Mucosa of descending colon (tissue), 3 donors: ENCODE measurements at regions of chr9 and their contacts with region 1.

Region 1: GRCh38 chr9:32384364-32385151 is at the start of gene ACO1:
- DNase-seq: peak; percentile 93 to 96 (median 93)
- ATAC-seq: peak; percentile 98
- H3K4me3 ChIP-seq: peak within 1 kb of the TSS; percentile 46
- H3K4me1 ChIP-seq: peaks cover 8% of the 10 kb centered on the region
- CTCF ChIP-seq: no peak
- total RNA-seq, gene ACO1: 30.9 to 50.4 (median 32.6) TPM

Region 2: GRCh38 chr9:32326146-32326545 is 58.4 kb before region 1 on chr9:
- intact Hi-C with region 1: no loop called
- DNase-seq: no peak
- ATAC-seq: no peak
- H3K4me3 ChIP-seq: no peak overlapping the region
- H3K4me1 ChIP-seq: no peaks in the 10 kb centered on the region
- CTCF ChIP-seq: no peak

Region 3: DNA sequence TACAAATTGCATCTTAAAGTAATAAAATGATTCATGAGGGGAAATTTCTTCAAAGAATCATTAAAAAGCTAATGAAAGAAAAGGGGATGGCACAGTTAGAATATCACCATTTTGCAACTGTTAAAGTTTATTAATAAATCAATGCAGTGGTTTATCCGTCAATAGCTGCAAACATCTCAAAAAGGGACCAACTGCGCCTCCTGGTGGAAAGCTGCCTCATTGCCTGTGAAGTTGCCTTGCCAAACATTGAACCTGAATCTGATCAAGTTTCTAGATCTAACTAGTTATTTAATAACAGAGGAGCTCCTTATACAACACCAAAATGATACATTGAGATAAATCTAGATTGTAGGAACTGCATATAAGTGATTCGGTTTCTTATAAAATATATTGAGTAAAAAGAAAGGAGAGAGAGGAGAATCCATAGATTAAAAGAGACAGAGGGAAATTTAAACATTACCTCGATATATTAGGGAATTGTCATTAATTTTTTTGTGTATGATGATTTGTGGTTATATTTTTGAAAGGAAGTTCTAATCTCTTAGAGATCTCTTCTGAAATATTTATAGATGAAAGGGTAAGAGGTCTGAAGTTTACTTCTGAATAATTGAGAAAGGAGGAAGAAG is 195.3 kb after region 1 on chr9:
- intact Hi-C with region 1: loop called in 1 of 2 experiments (anchors 5 kb)
- DNase-seq: peak in 2 of 3 donors; percentile 78 to 88
- ATAC-seq: peak; percentile 56
- H3K4me3 ChIP-seq: no peak overlapping the region
- H3K4me1 ChIP-seq: no peaks in the 10 kb centered on the region
- CTCF ChIP-seq: peak; percentile 82

Region 4: DNA sequence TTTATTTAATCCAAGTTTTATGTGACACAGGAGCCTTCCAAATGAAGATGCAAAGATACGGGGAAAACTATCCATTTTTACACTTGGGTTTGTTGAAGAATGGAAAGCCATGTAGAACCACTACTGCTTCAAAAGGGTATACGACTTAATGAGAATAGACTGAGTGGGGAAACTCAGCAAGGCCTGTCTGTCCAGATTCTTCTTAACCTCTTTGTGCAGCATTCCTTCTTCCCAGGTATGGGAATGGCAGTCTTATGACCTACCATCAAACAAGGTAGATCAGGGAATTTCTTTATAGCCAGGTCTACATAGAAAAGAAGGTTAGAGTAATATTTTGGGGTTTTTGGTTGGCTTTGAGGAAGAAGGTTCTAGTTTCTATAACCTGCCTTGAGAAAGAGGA is 593.5 kb after region 1 on chr9:
- intact Hi-C with region 1: loop called in 1 of 2 experiments (anchors 5 kb)
- DNase-seq: no peak
- ATAC-seq: no peak
- H3K4me3 ChIP-seq: no peak overlapping the region
- H3K4me1 ChIP-seq: no peaks in the 10 kb centered on the region
- CTCF ChIP-seq: no peak